Body of pancreas (tissue), 4 donors: ENCODE measurements at regions of chr12 and their contacts with region 1.

Region 1: GRCh38 chr12:15146585-15146984 is 74.6 kb downstream of the RERG start:
- DNase-seq: peak in 1 of 4 donors; percentile 12
- ATAC-seq: no peak
- H3K4me3 ChIP-seq: no peak overlapping the region
- H3K27ac ChIP-seq: peak overlapping the region in 1 of 4 donors; percentile 18
- H3K4me1 ChIP-seq: peaks cover 8% of the 10 kb centered on the region
- H3K27me3 ChIP-seq: no peaks in the 10 kb centered on the region
- CTCF ChIP-seq: no peak
- POLR2A ChIP-seq: no peak

Region 2: GRCh38 chr12:15220994-15221885 is 74.7 kb after region 1 on chr12 and contains the start of gene RERG:
- intact Hi-C with region 1: loop called (anchors 10 kb)
- DNase-seq: peak; percentile 76 to 86 (median 78)
- ATAC-seq: peak; percentile 99
- H3K4me3 ChIP-seq: no peak within 1 kb of the TSS
- H3K27ac ChIP-seq: peak within 1 kb of the TSS; percentile 3 to 64 (median 60)
- H3K4me1 ChIP-seq: peaks cover 9% of the 10 kb centered on the region
- H3K27me3 ChIP-seq: no peaks in the 10 kb centered on the region
- CTCF ChIP-seq: peak; percentile 91 to 99 (median 96)
- POLR2A ChIP-seq: peak in 2 of 3 donors; percentile 23 to 38
- total RNA-seq, gene RERG: 10.9 to 13.8 TPM

Region 3: GRCh38 chr12:15306605-15307004 is 160.0 kb after region 1 on chr12:
- intact Hi-C with region 1: no loop called
- DNase-seq: no peak
- ATAC-seq: no peak
- H3K4me3 ChIP-seq: no peak overlapping the region
- H3K27ac ChIP-seq: no peak overlapping the region
- H3K4me1 ChIP-seq: no peaks in the 10 kb centered on the region
- H3K27me3 ChIP-seq: no peaks in the 10 kb centered on the region
- CTCF ChIP-seq: no peak
- POLR2A ChIP-seq: no peak